AG04450 (cell line): ENCODE measurements at regions of chr10 and their contacts with region 1.

Region 1: GRCh38 chr10:69760072-69760471 is 41.6 kb upstream of the COL13A1 start:
- DNase-seq: peak; percentile 68
- H3K4me3 ChIP-seq: no peak overlapping the region
- H3K27ac ChIP-seq: peak overlapping the region; percentile 61
- H3K27me3 ChIP-seq: peaks cover 4% of the 10 kb centered on the region
- CTCF ChIP-seq: no peak

Region 2: GRCh38 chr10:67837541-67838314 is 1922.3 kb before region 1 on chr10 and contains the start of gene DNAJC12:
- CTCF ChIA-PET with region 1: no interaction called
- POLR2A ChIA-PET with region 1: no interaction called
- DNase-seq: peak; percentile 30
- H3K4me3 ChIP-seq: peak within 1 kb of the TSS; percentile 14
- H3K27ac ChIP-seq: no peak within 1 kb of the TSS
- H3K27me3 ChIP-seq: no peaks in the 10 kb centered on the region
- CTCF ChIP-seq: no peak
- polyA plus RNA-seq, gene DNAJC12: 6.2 and 8.3 TPM in 2 replicates

Region 3: GRCh38 chr10:69749178-69750010 is 10.7 kb before region 1 on chr10:
- CTCF ChIA-PET with region 1: no interaction called
- POLR2A ChIA-PET with region 1: interaction called, 11 read pairs
- DNase-seq: no peak
- H3K4me3 ChIP-seq: no peak overlapping the region
- H3K27ac ChIP-seq: no peak overlapping the region
- H3K27me3 ChIP-seq: no peaks in the 10 kb centered on the region
- CTCF ChIP-seq: no peak

Region 4: DNA sequence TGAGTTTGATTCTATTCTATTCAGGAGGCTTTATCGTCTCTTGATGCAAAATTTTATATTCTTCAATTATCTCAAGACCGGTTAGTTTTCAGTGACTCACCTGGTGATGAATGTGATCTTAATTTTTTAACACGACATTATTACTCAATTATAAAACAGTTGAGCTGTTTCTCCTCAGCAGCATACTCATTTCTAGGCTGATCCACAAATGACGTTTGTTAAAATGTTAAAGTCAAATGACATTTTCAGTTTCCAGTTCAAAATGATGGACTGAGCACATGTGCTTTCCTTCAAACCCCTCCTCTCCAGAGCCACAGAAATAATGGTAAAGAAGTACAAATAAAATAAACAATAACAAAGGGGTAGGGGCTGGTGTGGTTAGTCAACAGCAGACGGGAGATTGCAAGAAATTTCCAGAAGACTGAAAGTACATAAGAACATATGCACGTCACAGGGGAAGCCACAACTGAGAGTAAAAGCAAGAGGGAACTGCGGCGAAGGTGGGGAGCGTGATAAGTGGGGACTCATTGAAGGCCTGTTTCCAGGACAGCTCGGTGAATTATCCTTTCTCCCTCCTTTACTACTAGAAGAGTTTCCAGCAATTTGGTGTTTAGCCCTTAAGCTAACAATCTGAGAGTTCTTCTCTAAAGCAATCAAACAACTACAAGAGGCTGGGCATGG is 303.5 kb after region 1 on chr10:
- CTCF ChIA-PET with region 1: no interaction called
- POLR2A ChIA-PET with region 1: no interaction called
- DNase-seq: no peak
- H3K4me3 ChIP-seq: no peak overlapping the region
- H3K27ac ChIP-seq: no peak overlapping the region
- H3K27me3 ChIP-seq: no peaks in the 10 kb centered on the region
- CTCF ChIP-seq: no peak